ENCODE measurements at regions of chr21 and their contacts with region 1.

Region 1: GRCh38 chr21:36188081-36188681 is 31.6 kb downstream of the DOP1B start:
- DNase-seq: no peak
- H3K4me3 Mint-ChIP-seq: no peak overlapping the region
- H3K27ac Mint-ChIP-seq: peak overlapping the region; percentile 65
- H3K4me1 Mint-ChIP-seq: peaks cover 22% of the 10 kb centered on the region
- H3K27me3 Mint-ChIP-seq: no peaks in the 10 kb centered on the region

Region 2: GRCh38 chr21:36135391-36136102 is 52.6 kb before region 1 on chr21:
- CTCF ChIA-PET with region 1: no interaction called
- POLR2A ChIA-PET with region 1: no interaction called
- DNase-seq: peak; percentile 73
- H3K4me3 Mint-ChIP-seq: peak overlapping the region; percentile 88
- H3K27ac Mint-ChIP-seq: peak overlapping the region; percentile 97
- H3K4me1 Mint-ChIP-seq: peaks cover 40% of the 10 kb centered on the region
- H3K27me3 Mint-ChIP-seq: no peaks in the 10 kb centered on the region

Region 3: GRCh38 chr21:36203617-36203917 is 15.4 kb after region 1 on chr21:
- CTCF ChIA-PET with region 1: interaction called, 15 read pairs
- POLR2A ChIA-PET with region 1: no interaction called
- DNase-seq: peak; percentile 34
- H3K4me3 Mint-ChIP-seq: no peak overlapping the region
- H3K27ac Mint-ChIP-seq: peak overlapping the region; percentile 37
- H3K4me1 Mint-ChIP-seq: peaks cover 32% of the 10 kb centered on the region
- H3K27me3 Mint-ChIP-seq: no peaks in the 10 kb centered on the region